AG04449 (cell line): ENCODE measurements at regions of chr6 and their contacts with region 1.

Region 1: DNA sequence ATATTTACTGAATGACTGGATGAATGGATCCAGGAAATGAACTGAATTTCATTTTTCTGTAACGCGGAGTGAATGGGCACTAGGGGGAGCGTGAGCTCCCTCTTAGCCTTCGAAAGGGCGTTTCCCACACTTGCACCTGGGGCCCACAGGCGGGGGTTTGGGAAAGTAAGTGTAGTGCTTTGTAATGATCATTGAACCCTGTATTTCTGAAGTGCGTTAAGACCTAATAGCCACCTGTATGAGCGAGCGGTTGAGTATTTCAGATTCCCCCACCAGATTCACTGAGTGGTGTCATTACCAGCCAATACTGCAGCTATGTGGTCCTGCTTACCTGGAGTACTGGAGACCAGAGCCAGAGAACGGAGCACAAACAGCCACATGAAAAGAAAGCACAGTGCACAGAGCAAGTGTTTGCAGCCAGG is 10.5 kb downstream of the SYTL3 start:
- DNase-seq: no peak
- H3K4me3 ChIP-seq: no peak overlapping the region
- CTCF ChIP-seq: peak; percentile 53

Region 2: DNA sequence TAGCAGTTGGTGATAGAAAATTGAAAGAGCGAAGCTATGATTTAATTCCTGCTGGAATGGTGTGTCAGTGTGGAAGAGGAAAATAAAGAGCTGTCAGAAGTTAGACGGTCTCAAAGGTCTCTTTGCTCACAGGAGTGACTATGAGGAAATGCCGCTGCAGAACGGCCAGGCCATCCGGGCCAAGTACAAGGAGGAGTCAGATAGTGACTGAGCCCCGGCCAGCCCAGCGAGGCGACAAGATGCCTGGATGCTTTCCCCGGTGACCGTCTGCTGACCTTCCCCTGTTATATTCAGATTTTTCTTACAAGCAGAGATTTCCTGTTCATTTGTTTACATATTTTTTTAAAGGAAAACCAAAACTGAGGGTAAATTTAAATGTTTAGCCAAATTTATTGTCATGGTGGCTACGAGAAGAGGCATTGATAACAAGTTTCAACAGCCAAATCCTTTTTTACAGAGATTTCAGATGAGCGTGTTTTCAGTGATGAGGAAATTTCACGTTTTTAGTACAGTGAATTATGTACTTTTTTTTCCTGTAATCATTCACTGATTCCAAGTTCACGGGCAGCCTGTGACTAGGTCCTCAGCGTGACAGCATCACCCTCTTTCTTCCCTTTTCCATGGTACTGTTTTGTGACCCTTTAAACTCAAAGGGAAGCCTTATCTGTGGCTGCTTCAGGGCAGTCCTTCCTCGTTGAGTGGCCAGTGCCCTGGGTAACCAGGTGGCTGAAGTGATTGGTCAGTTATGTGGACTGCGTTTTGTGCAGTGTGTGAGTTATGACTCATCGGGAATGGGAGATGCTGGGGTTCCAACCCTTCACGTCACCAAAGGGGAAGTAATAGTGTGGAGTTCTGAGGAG is 28.4 kb before region 1 on chr6:
- CTCF ChIA-PET with region 1: no interaction called
- POLR2A ChIA-PET with region 1: no interaction called
- DNase-seq: no peak
- H3K4me3 ChIP-seq: no peak overlapping the region
- CTCF ChIP-seq: no peak

Region 3: GRCh38 chr6:158644231-158645063 is 15.9 kb before region 1 on chr6 and contains the start of gene DYNLT1:
- CTCF ChIA-PET with region 1: interaction called, 27 read pairs
- POLR2A ChIA-PET with region 1: interaction called, 3 read pairs
- DNase-seq: no peak
- H3K4me3 ChIP-seq: peak within 1 kb of the TSS; percentile 99
- CTCF ChIP-seq: no peak

Region 4: GRCh38 chr6:158649289-158650143 is 10.8 kb before region 1 on chr6 and contains the start of gene SYTL3:
- CTCF ChIA-PET with region 1: interaction called, 27 read pairs
- POLR2A ChIA-PET with region 1: interaction called, 3 read pairs
- DNase-seq: peak; percentile 69
- H3K4me3 ChIP-seq: no peak within 1 kb of the TSS
- CTCF ChIP-seq: no peak